ENCODE measurements at regions of chr17 and their contacts with region 1.

Region 1: DNA sequence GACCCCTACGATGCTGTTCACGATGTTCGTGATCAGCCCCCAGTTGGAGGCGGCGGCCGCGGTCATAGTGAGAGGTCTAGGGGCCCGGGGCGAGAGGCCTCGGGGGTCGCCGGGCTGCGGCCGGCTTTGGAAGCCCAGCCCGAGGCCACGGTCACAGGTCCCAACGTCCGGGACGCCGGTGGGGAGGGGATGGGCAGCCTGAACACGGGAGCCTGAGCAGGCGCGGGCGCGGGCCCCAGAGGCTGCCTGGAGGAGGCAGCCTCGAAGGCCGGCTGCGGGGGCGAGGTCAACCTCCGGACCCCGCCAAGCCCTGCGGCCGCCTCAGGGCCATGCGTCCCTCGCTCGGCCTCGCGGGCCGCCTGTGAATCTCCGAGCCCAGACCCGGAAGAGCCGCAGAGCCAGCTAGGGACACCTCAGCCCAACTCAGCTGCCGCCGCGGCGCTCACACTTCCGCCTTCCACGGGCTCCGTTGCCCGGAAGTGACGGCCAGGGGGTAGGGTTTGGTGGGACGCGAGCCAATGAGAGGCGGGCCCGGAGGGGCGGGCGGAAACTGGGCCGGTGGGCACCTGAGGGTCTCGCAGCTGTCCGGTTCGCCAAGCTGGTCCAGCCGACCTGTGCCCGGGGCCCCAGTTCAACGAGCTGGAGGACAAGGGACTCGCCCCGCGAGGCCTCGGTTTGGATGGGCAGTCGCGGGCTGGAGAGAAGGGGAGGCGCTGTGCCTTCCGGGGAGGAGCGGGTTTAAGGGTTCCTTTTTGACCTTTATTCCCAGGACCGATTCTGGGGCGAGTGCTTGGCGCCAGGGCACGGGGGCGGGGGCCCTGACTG is at the start of gene SLC38A10:
- DNase-seq: peak; percentile 81 to 93 (median 89)
- ATAC-seq: peak; percentile 91
- H3K4me3 ChIP-seq: peak within 1 kb of the TSS; percentile 82
- H3K4me3 Mint-ChIP-seq: peak within 1 kb of the TSS; percentile 92 to 99 (median 97)
- H3K27ac ChIP-seq: peak within 1 kb of the TSS; percentile 94
- H3K27ac Mint-ChIP-seq: peak within 1 kb of the TSS; percentile 92 to 98 (median 96)
- H3K4me1 ChIP-seq: peaks cover 22% of the 10 kb centered on the region in 2 donors
- H3K4me1 Mint-ChIP-seq: peaks cover 18 to 50% (median 36%) of the 10 kb centered on the region in 7 donors
- H3K27me3 ChIP-seq: no peaks in the 10 kb centered on the region
- H3K27me3 Mint-ChIP-seq: no peaks in the 10 kb centered on the region
- total RNA-seq, gene SLC38A10: 54.9 to 122 (median 86.5) TPM

Region 2: DNA sequence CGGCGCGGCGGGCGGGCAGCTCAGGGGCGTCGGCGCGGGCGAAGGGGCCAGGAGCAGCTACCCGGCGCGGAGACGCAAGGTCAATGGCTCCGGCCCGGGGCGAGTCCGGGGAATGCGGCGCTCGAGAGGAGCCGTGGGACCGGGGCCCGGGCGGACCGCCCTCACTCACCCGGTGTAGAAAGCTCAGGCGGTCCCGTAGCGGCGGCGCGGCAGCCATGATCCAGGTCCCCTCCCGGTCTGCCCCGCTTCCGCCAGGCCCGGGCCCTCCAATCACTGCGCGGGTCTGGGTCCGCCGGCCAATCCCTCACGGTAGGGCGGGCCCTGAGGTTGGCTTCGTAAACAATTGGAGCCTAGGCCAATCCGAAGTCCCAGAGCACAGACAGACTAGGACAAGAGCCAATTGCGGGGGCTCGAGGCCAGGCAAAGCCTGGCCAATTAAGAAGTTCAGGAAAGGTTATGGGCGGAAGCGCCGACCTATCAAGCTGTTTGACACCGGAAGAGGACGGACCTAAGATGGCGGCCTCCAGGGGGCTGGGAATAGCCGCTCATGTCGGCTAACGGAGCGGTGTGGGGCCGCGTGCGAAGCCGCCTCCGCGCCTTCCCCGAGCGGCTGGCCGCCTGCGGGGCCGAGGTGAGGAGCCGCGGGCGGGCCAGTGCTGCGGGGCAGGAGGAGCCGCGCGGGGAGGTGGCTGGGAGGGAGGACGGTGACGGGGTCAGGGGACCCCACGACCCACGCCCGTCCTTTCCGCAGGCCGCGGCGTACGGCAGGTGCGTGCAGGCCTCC is 56.1 kb before region 1 on chr17 and contains the starts of genes NDUFAF8 and TEPSIN:
- CTCF ChIA-PET with region 1: interaction called, 3 read pairs
- POLR2A ChIA-PET with region 1: interaction called, 8 read pairs
- intact Hi-C with region 1: loop called in 1 of 2 experiments (anchors 1 kb)
- DNase-seq: peak; percentile 87 to 98 (median 97)
- ATAC-seq: peak; percentile 98
- H3K4me3 ChIP-seq: peak within 1 kb of the TSS; percentile 71
- H3K4me3 Mint-ChIP-seq: peak within 1 kb of the TSS; percentile 92 to 97 (median 95)
- H3K27ac ChIP-seq: peak within 1 kb of the TSS; percentile 79
- H3K27ac Mint-ChIP-seq: peak within 1 kb of the TSS; percentile 86 to 95 (median 90)
- H3K4me1 ChIP-seq: peaks cover 22 to 24% of the 10 kb centered on the region in 2 donors
- H3K4me1 Mint-ChIP-seq: peaks cover 17 to 51% (median 38%) of the 10 kb centered on the region in 7 donors
- H3K27me3 ChIP-seq: no peaks in the 10 kb centered on the region
- H3K27me3 Mint-ChIP-seq: no peaks in the 10 kb centered on the region
- total RNA-seq, gene NDUFAF8: 34.2 to 45.6 (median 43.5) TPM
- total RNA-seq, gene TEPSIN: 52.6 to 115 (median 90.0) TPM

Region 3: DNA sequence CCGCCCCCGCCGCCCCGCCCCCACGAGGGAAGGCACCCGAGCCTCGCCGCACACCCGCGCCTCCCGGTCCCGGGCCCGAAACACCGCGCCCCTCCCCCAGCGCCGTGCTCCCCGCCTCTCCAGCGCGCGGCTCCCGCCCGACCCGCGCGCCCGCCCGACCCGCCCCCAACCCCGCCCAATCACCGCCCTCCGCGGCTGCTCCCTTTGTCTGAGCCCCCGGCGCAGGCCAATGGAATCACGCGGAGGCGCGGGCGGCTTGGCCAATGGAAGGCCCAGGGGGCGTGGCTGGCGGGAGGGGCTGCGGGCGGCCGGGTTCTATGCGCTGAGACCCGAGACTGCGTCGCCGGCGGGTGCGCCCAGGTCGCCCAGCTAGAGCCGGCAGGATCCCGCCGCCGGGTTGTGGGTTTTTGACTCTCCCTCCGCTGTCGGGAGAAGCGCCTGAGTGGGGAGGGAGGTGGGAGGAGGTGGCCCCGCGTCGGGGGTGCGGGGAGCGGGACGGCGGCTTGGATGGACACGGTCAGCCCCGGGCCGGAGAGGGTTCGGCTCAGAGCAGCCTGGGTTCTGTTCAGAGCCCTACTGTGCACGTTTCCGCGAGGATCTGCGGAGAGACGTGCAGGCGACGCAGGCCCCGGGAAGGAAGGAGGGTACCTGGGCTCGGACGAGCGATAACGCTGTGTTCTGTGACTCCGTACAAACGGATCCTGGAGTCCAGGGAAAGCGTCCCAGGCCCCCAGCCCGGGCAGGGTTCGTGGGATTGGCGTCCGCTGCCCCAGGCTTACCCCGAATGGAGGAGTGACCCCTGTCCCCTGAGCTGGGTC is 51.2 kb after region 1 on chr17:
- CTCF ChIA-PET with region 1: no interaction called
- POLR2A ChIA-PET with region 1: no interaction called
- intact Hi-C with region 1: loop called in 1 of 2 experiments (anchors 1 kb)
- DNase-seq: peak; percentile 88 to 94 (median 92)
- ATAC-seq: peak; percentile 97
- H3K4me3 ChIP-seq: peak overlapping the region; percentile 44
- H3K4me3 Mint-ChIP-seq: peak overlapping the region; percentile 16 to 74 (median 58)
- H3K27ac ChIP-seq: no peak overlapping the region
- H3K27ac Mint-ChIP-seq: no peak overlapping the region
- H3K4me1 ChIP-seq: peaks cover 17 to 31% of the 10 kb centered on the region in 2 donors
- H3K4me1 Mint-ChIP-seq: peaks cover 10 to 29% (median 16%) of the 10 kb centered on the region in 7 donors
- H3K27me3 ChIP-seq: peaks cover 3 to 32% of the 10 kb centered on the region in 2 donors
- H3K27me3 Mint-ChIP-seq: peaks cover 26 to 57% (median 32%) of the 10 kb centered on the region in 5 donors

Region 4: GRCh38 chr17:81473019-81473418 is 178.0 kb after region 1 on chr17:
- CTCF ChIA-PET with region 1: no interaction called
- POLR2A ChIA-PET with region 1: no interaction called
- intact Hi-C with region 1: no loop called
- DNase-seq: no peak
- ATAC-seq: no peak
- H3K4me3 ChIP-seq: no peak overlapping the region
- H3K4me3 Mint-ChIP-seq: no peak overlapping the region
- H3K27ac ChIP-seq: no peak overlapping the region
- H3K27ac Mint-ChIP-seq: no peak overlapping the region
- H3K4me1 ChIP-seq: no peaks in the 10 kb centered on the region
- H3K4me1 Mint-ChIP-seq: no peaks in the 10 kb centered on the region
- H3K27me3 ChIP-seq: no peaks in the 10 kb centered on the region
- H3K27me3 Mint-ChIP-seq: no peaks in the 10 kb centered on the region

Region 5: DNA sequence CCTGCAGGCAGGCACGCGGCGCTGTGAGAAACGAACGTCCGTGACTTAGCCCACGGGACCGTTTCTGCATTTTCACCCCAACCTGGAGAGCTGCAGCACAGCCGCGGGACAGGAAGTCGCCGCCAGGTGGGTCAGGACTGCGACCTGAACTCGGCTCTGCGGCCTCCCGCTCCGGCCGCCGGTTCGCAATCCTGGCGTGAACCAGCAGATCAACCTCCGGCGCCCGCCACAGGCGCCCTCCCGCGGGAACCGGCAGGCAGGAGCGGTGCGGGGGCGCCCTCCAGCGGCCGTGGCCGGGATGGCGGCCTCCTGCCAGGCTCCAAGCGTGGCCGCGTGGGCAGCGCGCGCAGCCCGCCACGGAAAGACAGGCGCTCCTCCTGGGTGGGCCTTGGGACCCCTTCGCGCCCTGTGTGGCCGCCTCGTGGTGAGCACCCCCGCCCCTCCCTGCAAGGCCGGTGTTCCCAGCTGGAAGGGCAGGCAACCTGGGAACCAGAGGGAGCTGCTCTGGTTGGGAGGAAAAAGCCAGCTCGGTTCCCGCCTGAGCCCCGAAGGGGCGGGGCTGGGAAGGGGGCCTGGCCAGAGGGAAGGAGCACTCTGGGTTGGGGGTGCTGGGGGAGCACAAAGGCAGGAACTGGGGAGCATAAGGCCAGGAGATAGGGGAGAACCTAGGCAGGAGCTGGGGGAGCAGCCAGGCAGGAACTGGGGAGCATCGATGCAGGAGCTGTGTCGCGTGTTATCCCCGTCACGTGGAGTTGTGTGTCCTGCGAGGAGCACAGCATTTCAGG is 189.3 kb after region 1 on chr17:
- CTCF ChIA-PET with region 1: interaction called, 22 read pairs
- POLR2A ChIA-PET with region 1: interaction called, 13 read pairs
- intact Hi-C with region 1: loop called (anchors 1 to 2 kb)
- DNase-seq: peak; percentile 76 to 96 (median 88)
- ATAC-seq: peak; percentile 88
- H3K4me3 ChIP-seq: peak overlapping the region; percentile 51
- H3K4me3 Mint-ChIP-seq: peak overlapping the region in 6 of 10 donors; percentile 25 to 74 (median 52)
- H3K27ac ChIP-seq: no peak overlapping the region
- H3K27ac Mint-ChIP-seq: no peak overlapping the region
- H3K4me1 ChIP-seq: peaks cover 6 to 10% of the 10 kb centered on the region in 2 donors
- H3K4me1 Mint-ChIP-seq: peaks cover 5 to 15% (median 13%) of the 10 kb centered on the region in 7 donors
- H3K27me3 ChIP-seq: peaks cover 0 to 15% of the 10 kb centered on the region in 2 donors
- H3K27me3 Mint-ChIP-seq: peaks cover 11 to 30% (median 20%) of the 10 kb centered on the region in 5 donors

Region 6: GRCh38 chr17:81527591-81528383 is 232.7 kb after region 1 on chr17 and contains the start of gene FSCN2:
- CTCF ChIA-PET with region 1: no interaction called
- POLR2A ChIA-PET with region 1: no interaction called
- intact Hi-C with region 1: no loop called
- DNase-seq: no peak
- ATAC-seq: no peak
- H3K4me3 ChIP-seq: no peak within 1 kb of the TSS
- H3K4me3 Mint-ChIP-seq: no peak within 1 kb of the TSS
- H3K27ac ChIP-seq: no peak within 1 kb of the TSS
- H3K27ac Mint-ChIP-seq: no peak within 1 kb of the TSS
- H3K4me1 ChIP-seq: no peaks in the 10 kb centered on the region
- H3K4me1 Mint-ChIP-seq: peaks cover 0 to 1% (median 0%) of the 10 kb centered on the region in 7 donors
- H3K27me3 ChIP-seq: no peaks in the 10 kb centered on the region
- H3K27me3 Mint-ChIP-seq: peaks cover 0 to 9% (median 3%) of the 10 kb centered on the region in 5 donors
- total RNA-seq, gene FSCN2: 0.56 to 1.6 (median 0.70) TPM

Region 7: GRCh38 chr17:81601525-81602120 is 306.6 kb after region 1 on chr17:
- CTCF ChIA-PET with region 1: interaction called, 8 read pairs
- POLR2A ChIA-PET with region 1: no interaction called
- intact Hi-C with region 1: loop called in 1 of 2 experiments (anchors 5 kb)
- DNase-seq: peak in 8 of 9 donors; percentile 30 to 69 (median 60)
- ATAC-seq: peak; percentile 92
- H3K4me3 ChIP-seq: no peak overlapping the region
- H3K4me3 Mint-ChIP-seq: no peak overlapping the region
- H3K27ac ChIP-seq: no peak overlapping the region
- H3K27ac Mint-ChIP-seq: peak overlapping the region in 3 of 9 donors; percentile 1 to 48 (median 25)
- H3K4me1 ChIP-seq: peaks cover 0 to 6% of the 10 kb centered on the region in 2 donors
- H3K4me1 Mint-ChIP-seq: peaks cover 2 to 14% (median 9%) of the 10 kb centered on the region in 7 donors
- H3K27me3 ChIP-seq: no peaks in the 10 kb centered on the region
- H3K27me3 Mint-ChIP-seq: no peaks in the 10 kb centered on the region